ENCODE measurements at regions of chr6 and their contacts with region 1.

Region 1: DNA sequence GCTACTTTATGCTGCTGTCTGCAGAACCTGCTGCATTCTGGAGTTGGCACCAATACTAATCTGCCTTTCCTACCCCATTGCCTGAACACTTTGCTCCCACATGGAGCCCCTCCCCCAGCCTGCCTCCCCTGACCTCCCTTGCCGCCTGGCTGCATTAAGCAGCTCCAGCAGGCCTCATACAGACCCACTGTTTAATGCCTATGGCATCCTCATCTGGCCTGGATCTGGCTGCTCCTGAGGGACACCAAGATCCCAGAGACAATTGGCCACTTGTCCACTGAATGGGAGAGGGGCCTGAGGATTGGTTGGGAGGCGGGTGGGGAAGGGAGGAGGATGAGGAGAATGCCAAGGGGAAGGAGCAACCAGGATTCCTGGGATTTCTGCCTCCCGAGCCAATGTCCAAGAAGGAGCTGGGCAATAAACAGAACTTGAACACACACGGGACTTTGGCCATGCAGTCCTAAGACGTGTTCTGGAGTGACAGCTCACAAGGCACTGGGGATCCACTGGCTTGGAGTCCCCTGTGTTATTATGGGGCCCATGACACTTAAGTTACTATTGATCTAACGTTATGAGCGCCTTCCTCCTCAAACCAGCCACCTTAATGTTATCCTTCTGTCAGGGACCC is 10.4 kb upstream of the KCNK5 start:
- DNase-seq: no peak
- H3K4me3 ChIP-seq: no peak overlapping the region
- H3K27ac ChIP-seq: no peak overlapping the region
- H3K4me1 ChIP-seq: peaks cover 0 to 2% (median 1%) of the 10 kb centered on the region in 4 experiments; a peak in 3 of 7 replicates
- H3K27me3 ChIP-seq: no peaks in the 10 kb centered on the region
- CTCF ChIP-seq: peak in 2 of 3 experiments; percentile 17 to 19; a peak in 2 of 4 replicates
- EP300 ChIP-seq: no peak
- POLR2A ChIP-seq: no peak
- RAD21 ChIP-seq: peak in 1 of 2 experiments; percentile 32; a peak in 3 of 4 replicates

Region 2: DNA sequence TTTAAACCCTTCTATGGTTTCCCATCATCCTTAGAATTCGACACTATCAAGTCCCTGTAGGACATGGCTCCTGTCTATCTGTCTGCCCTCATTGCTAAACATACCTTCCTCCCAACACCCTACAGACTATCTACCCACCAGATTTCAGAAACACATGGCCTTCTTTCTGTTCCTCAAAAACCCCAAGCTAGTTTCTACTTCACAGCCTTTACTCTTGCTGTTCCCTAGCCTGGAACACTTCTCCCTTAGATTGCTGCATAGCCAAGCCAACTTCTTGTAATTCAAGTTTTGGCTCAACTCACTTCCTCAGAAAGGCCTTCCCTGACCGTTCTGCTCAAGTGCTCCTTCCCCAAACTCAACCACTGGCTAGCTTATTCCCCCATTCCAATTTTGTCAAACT is 756.1 kb before region 1 on chr6:
- CTCF ChIA-PET with region 1: no interaction called
- POLR2A ChIA-PET with region 1: no interaction called
- DNase-seq: no peak
- H3K4me3 ChIP-seq: no peak overlapping the region
- H3K27ac ChIP-seq: no peak overlapping the region
- H3K4me1 ChIP-seq: peaks cover 0 to 10% (median 3%) of the 10 kb centered on the region in 4 experiments; a peak in 3 of 7 replicates
- H3K27me3 ChIP-seq: no peaks in the 10 kb centered on the region
- CTCF ChIP-seq: no peak
- EP300 ChIP-seq: no peak
- POLR2A ChIP-seq: no peak
- RAD21 ChIP-seq: no peak

Region 3: DNA sequence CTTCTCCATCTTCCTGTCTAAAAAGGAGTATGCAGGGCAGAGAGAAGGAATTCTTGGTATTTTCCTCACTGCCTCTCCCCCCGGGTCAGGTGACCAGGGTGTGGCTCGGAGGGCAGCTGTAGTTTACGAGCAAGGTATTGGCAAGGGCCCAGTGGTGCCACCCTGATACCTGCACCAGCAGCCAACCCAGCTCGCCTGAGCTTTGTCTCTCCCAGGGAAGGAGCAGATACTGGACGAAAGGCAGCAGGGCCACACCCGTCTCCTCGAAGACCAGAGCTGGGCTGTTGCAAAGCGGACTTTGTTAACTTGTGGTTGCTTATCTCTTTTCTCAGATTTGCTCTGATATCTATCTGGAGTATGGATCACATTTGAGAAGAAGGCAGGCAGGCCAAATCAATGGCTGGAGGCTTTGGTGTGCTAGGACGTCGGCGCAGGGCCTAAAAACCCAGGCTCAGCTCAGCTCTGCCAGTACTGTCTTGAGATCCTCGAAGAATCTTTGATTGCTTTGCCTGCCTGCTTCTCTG is 35.7 kb before region 1 on chr6:
- CTCF ChIA-PET with region 1: interaction called, 836 read pairs
- POLR2A ChIA-PET with region 1: no interaction called
- DNase-seq: no peak
- H3K4me3 ChIP-seq: 0 out of 8 replicates have a peak overlapping the region, but pooled peaks of 1 of the 4 experiments have one; percentile 14
- H3K27ac ChIP-seq: peak overlapping the region; percentile 77; the same call in 1 of the 2 replicates
- H3K4me1 ChIP-seq: peaks cover 32 to 61% (median 43%) of the 10 kb centered on the region in 4 experiments
- H3K27me3 ChIP-seq: no peaks in the 10 kb centered on the region
- CTCF ChIP-seq: no peak
- EP300 ChIP-seq: no peak
- POLR2A ChIP-seq: no peak
- RAD21 ChIP-seq: no peak

Region 4: GRCh38 chr6:39256294-39256940 is 16.8 kb after region 1 on chr6:
- CTCF ChIA-PET with region 1: interaction called, 13 read pairs
- POLR2A ChIA-PET with region 1: no interaction called
- DNase-seq: peak in 1 of 2 experiments; percentile 21
- H3K4me3 ChIP-seq: no peak overlapping the region
- H3K27ac ChIP-seq: no peak overlapping the region
- H3K4me1 ChIP-seq: peaks cover 0 to 10% (median 4%) of the 10 kb centered on the region in 4 experiments; a peak in 3 of 7 replicates
- H3K27me3 ChIP-seq: no peaks in the 10 kb centered on the region
- CTCF ChIP-seq: no peak
- EP300 ChIP-seq: no peak
- POLR2A ChIP-seq: no peak
- RAD21 ChIP-seq: no peak